ENCODE measurements at regions of chr2 and their contacts with region 1.

Region 1: GRCh38 chr2:106104332-106105062 is 89.6 kb downstream of the UXS1 start:
- DNase-seq: peak; percentile 81
- H3K4me3 ChIP-seq: no peak overlapping the region; a peak in 1 of 4 replicates
- H3K27ac ChIP-seq: no peak overlapping the region
- H3K4me1 ChIP-seq: peaks cover 4 to 7% of the 10 kb centered on the region in 2 experiments; a peak in 2 of 4 replicates
- H3K27me3 ChIP-seq: no peaks in the 10 kb centered on the region
- CTCF ChIP-seq: peak; percentile 98
- EP300 ChIP-seq: no peak
- RAD21 ChIP-seq: peak; percentile 96

Region 2: GRCh38 chr2:105576440-105577252 is 527.9 kb before region 1 on chr2:
- CTCF ChIA-PET with region 1: interaction called, 15 read pairs
- POLR2A ChIA-PET with region 1: no interaction called
- DNase-seq: peak; percentile 47
- H3K4me3 ChIP-seq: no peak overlapping the region
- H3K27ac ChIP-seq: no peak overlapping the region
- H3K4me1 ChIP-seq: no peaks in the 10 kb centered on the region; a peak in 1 of 4 replicates
- H3K27me3 ChIP-seq: no peaks in the 10 kb centered on the region
- CTCF ChIP-seq: peak; percentile 57
- EP300 ChIP-seq: no peak
- RAD21 ChIP-seq: peak; percentile 85

Region 3: DNA sequence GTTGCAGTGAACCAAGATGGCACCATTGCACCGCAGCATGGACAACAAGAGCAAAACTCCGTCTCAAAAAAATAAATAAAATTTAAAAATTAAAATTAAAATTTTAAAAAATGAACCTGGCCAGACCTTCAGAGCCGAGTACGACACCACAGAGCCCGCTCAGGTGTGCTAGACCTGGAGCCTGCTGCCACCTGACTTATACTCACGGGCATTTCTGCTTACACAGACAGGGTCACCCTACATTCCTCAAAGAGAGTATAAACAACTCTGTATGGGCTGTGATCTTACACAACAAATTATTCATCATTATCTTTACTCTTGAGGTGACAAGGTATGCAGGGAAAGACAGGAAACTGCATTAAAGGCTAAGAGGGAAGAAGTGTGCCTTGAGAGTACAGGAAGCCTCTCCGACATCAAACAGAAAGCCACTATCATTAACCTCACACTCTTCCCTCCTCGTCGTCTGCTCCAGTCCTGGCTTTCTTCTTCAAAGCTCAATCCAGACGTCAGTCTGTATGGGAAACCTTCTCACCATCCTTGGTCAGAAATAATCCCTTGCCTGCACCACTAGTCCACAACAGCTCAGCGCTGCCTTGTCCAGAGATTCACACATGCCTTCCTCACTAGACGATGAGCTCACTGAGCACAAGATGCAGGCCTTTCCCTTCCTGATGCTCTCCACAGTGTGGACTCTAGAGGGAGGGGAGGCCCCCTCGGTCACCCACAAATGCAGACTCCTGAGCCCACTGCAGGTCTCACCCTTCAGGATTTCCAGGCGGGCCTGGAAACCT is 33.4 kb after region 1 on chr2:
- CTCF ChIA-PET with region 1: no interaction called
- POLR2A ChIA-PET with region 1: no interaction called
- DNase-seq: no peak
- H3K4me3 ChIP-seq: no peak overlapping the region
- H3K27ac ChIP-seq: no peak overlapping the region
- H3K4me1 ChIP-seq: no peaks in the 10 kb centered on the region
- H3K27me3 ChIP-seq: no peaks in the 10 kb centered on the region
- CTCF ChIP-seq: no peak
- EP300 ChIP-seq: no peak
- RAD21 ChIP-seq: no peak

Measured in SK-N-SH (cell line).